Panc1 (cell line): ENCODE measurements at regions of chr17 and their contacts with region 1.

Region 1: GRCh38 chr17:9924735-9925191 is 19.7 kb upstream of the RCVRN start:
- DNase-seq: peak; percentile 43
- ATAC-seq: peak; percentile 85
- H3K4me3 ChIP-seq: no peak overlapping the region
- H3K27ac ChIP-seq: no peak overlapping the region
- H3K4me1 ChIP-seq: no peaks in the 10 kb centered on the region
- H3K27me3 ChIP-seq: peaks cover 3% of the 10 kb centered on the region; the same call in 1 of the 2 replicates
- CTCF ChIP-seq: peak; percentile 84

Region 2: DNA sequence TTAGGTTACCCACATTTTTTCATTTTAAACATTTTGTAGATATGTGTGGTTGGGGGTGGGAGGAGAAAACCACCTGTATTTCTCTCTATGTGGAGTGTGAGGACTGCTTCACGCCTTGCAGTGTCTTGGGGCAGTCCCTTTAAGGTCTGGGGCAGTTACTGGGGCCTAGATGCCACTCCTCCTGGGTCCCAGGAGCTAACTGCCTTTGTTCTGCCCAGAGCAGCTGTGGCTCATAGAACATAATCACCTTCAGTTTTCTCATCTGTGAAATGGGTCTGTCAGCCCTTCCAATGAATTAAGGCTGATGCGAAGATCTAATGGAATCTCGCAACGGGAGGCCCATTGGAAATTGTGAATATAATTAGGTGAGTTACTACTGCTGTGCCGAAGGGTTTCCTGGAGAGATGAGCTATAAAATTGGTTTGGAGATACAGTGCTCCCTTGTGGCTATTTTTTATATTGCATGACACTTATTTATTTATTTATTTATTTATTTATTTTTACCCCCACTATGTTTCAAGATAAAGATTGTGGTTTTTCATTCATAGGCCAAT is 156.3 kb before region 1 on chr17:
- CTCF ChIA-PET with region 1: no interaction called
- POLR2A ChIA-PET with region 1: no interaction called
- in situ Hi-C with region 1: no loop called
- intact Hi-C with region 1: no loop called
- DNase-seq: peak; percentile 18
- ATAC-seq: no peak
- H3K4me3 ChIP-seq: no peak overlapping the region
- H3K27ac ChIP-seq: no peak overlapping the region
- H3K4me1 ChIP-seq: no peaks in the 10 kb centered on the region
- H3K27me3 ChIP-seq: no peaks in the 10 kb centered on the region
- CTCF ChIP-seq: peak; percentile 56; the same call in 1 of the 2 replicates

Region 3: GRCh38 chr17:9850151-9850550 is 74.6 kb before region 1 on chr17:
- CTCF ChIA-PET with region 1: interaction called, 12 read pairs
- POLR2A ChIA-PET with region 1: no interaction called
- in situ Hi-C with region 1: no loop called
- intact Hi-C with region 1: no loop called
- DNase-seq: no peak
- ATAC-seq: no peak
- H3K4me3 ChIP-seq: no peak overlapping the region
- H3K27ac ChIP-seq: no peak overlapping the region
- H3K4me1 ChIP-seq: no peaks in the 10 kb centered on the region
- H3K27me3 ChIP-seq: no peaks in the 10 kb centered on the region
- CTCF ChIP-seq: no peak

Region 4: DNA sequence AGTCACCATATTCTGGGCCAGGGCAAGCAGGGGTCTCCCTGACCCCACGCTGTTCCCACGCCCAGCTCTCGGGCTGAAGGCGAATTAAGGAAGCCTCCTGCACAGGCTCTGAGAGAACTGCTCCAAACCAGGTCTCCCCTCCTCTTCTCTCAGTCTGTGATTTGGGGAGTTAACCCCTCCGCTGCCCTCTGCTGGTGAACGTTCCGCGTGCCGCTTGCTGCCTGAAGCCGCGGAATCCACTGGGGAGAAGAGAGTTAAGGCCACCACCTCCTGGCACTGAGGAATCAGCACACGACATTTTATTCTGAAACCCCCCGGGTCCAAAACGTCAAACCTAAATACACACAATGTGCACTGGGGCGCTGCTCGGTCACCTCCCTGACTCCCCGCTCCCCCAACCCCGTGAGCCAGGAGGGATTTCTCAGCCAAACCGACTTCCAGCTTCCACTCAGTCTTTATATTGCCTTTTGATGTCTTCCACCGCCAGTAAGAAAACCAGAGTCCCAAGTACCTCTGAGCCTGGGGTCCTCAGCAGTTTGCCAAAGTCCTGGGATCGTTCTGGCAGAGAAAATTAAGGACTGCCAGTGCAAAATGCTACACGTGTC is 34.7 kb after region 1 on chr17:
- CTCF ChIA-PET with region 1: interaction called, 3 read pairs
- POLR2A ChIA-PET with region 1: no interaction called
- in situ Hi-C with region 1: no loop called
- intact Hi-C with region 1: loop called (anchors 5 kb)
- DNase-seq: no peak
- ATAC-seq: peak; percentile 88
- H3K4me3 ChIP-seq: no peak overlapping the region
- H3K27ac ChIP-seq: no peak overlapping the region
- H3K4me1 ChIP-seq: no peaks in the 10 kb centered on the region
- H3K27me3 ChIP-seq: peaks cover 5% of the 10 kb centered on the region; the same call in 1 of the 2 replicates
- CTCF ChIP-seq: peak; percentile 84

Region 5: DNA sequence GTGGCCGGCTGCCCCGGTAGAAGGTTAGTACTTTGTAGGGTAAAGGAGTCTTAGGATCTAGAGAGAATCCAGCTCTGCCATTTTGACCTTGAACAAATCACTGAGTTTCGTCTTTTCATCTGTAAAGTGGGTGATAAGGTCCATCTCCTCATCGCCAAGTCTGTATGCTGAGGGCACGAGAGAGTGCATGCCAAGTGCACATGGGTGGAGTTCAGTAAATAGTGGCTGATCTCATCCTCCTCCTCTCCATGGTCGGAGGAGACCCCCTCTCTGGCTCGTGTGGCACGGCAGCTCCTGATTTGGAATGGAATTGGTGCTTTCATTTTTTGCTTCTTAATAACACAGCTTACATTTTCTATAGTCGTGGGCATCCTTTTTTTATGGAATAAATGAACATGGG is 701.6 kb after region 1 on chr17:
- CTCF ChIA-PET with region 1: no interaction called
- POLR2A ChIA-PET with region 1: interaction called, 12 read pairs
- in situ Hi-C with region 1: no loop called
- intact Hi-C with region 1: no loop called
- DNase-seq: no peak
- ATAC-seq: no peak
- H3K4me3 ChIP-seq: no peak overlapping the region
- H3K27ac ChIP-seq: no peak overlapping the region
- H3K4me1 ChIP-seq: no peaks in the 10 kb centered on the region
- H3K27me3 ChIP-seq: no peaks in the 10 kb centered on the region
- CTCF ChIP-seq: no peak